ENCODE measurements at regions of chr5 and their contacts with region 1.

Region 1: DNA sequence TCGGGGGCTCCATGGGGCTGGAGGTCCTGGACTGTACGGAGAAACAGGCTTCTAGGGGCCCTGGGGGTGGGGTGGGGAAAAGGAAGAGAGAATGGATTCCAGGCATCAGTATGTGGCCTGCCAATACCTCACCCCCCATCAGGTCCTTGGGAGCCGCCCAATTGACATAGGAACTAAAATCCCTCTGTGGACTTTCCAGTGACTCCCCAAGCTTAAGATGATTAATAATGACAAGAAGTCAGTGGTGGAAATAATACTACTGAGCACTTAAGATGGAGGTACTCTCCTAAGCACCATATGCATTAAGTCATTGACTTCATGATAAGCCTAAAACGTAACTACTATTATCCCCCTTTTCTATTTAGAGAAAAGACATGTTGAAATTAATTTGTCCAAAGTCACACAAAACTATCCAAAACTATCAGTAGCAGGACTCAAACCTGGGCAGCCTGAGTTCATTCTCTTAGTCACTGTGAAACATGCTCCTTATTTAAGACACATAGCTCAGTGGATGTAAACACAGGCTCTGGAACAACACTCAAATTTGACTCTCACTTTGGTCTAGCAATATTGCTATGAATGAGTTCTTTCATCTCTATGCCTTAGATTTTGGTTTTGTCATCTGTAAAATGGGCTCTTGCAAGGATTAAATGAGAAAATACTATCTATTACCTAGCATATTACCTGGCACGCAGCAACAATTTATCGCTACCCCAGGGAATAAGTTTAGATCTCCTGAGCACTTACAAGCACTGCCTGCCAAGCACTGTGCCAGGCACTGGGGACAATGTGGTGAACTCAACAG is 9.5 kb downstream of the SPRY4 start:
- DNase-seq: no peak
- H3K4me3 ChIP-seq: no peak overlapping the region
- H3K27ac ChIP-seq: no peak overlapping the region
- H3K27me3 ChIP-seq: no peaks in the 10 kb centered on the region
- CTCF ChIP-seq: no peak

Region 2: GRCh38 chr5:142239394-142240159 is 75.7 kb before region 1 on chr5:
- CTCF ChIA-PET with region 1: interaction called, 13 read pairs
- POLR2A ChIA-PET with region 1: no interaction called
- DNase-seq: no peak
- H3K4me3 ChIP-seq: no peak overlapping the region
- H3K27ac ChIP-seq: no peak overlapping the region
- H3K27me3 ChIP-seq: no peaks in the 10 kb centered on the region
- CTCF ChIP-seq: no peak